ENCODE measurements at regions of chr12 and their contacts with region 1.

Region 1: DNA sequence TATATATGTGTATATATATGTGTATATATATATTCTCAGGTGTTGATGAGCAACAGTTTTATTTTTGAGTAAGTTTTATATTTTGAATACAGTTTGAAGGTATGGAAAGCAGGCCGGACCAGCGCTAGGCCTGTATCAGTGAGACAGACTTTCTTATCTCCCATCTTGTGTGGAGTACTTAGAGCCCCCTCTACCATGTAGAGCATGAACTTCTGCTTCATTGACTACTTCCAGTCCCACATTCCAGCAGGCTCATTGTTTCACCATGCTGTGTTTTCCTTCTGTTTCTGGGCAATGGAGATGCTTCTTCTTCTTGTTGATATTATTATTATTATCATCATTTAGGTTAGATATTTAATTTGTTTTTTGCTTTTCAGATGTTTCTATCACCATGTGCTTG is 76.4 kb downstream of the SLC16A7 start:
- DNase-seq: no peak
- H3K4me3 ChIP-seq: no peak overlapping the region
- H3K27ac ChIP-seq: no peak overlapping the region
- H3K4me1 ChIP-seq: no peaks in the 10 kb centered on the region
- H3K27me3 ChIP-seq: no peaks in the 10 kb centered on the region
- CTCF ChIP-seq: no peak
- POLR2A ChIP-seq: no peak

Region 2: GRCh38 chr12:58668871-58669270 is 1003.4 kb before region 1 on chr12:
- intact Hi-C with region 1: loop called (anchors 5 kb)
- DNase-seq: no peak
- H3K4me3 ChIP-seq: no peak overlapping the region
- H3K27ac ChIP-seq: no peak overlapping the region
- H3K4me1 ChIP-seq: no peaks in the 10 kb centered on the region
- H3K27me3 ChIP-seq: no peaks in the 10 kb centered on the region
- CTCF ChIP-seq: no peak
- POLR2A ChIP-seq: no peak

Region 3: GRCh38 chr12:59559696-59560095 is 112.6 kb before region 1 on chr12:
- intact Hi-C with region 1: no loop called
- DNase-seq: no peak
- H3K4me3 ChIP-seq: no peak overlapping the region
- H3K27ac ChIP-seq: no peak overlapping the region
- H3K4me1 ChIP-seq: no peaks in the 10 kb centered on the region
- H3K27me3 ChIP-seq: no peaks in the 10 kb centered on the region
- CTCF ChIP-seq: no peak
- POLR2A ChIP-seq: no peak